ENCODE measurements at regions of chr10 and their contacts with region 1.

Region 1: GRCh38 chr10:22420787-22421517 is 75.7 kb downstream of the SPAG6 start:
- DNase-seq: no peak
- H3K4me3 ChIP-seq: no peak overlapping the region
- H3K27ac ChIP-seq: no peak overlapping the region
- H3K4me1 ChIP-seq: peaks cover 4% of the 10 kb centered on the region
- H3K27me3 ChIP-seq: no peaks in the 10 kb centered on the region
- CTCF ChIP-seq: peak; percentile 46

Region 2: DNA sequence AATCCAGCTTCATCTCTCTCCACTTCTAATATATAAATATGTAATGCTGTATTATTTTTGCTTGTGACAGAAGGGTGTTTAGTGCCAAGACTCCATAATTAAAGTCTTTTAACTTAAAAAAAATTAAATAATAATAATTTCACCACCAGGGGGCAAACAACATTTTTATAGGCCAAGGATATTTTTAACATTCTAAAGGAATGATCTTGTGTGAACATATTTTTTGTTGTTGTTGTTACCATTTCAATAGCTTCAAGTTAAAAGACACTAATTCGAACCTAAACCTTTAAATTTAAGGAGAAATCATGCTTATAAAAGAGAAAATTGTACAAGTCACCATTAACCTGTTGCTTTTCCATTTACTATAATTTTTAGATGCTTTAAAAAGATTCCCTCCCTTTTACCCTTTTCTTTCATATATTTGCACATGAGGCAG is 410.0 kb before region 1 on chr10:
- CTCF ChIA-PET with region 1: no interaction called
- POLR2A ChIA-PET with region 1: no interaction called
- intact Hi-C with region 1: loop called (anchors 5 kb)
- DNase-seq: no peak
- H3K4me3 ChIP-seq: no peak overlapping the region
- H3K27ac ChIP-seq: no peak overlapping the region
- H3K4me1 ChIP-seq: no peaks in the 10 kb centered on the region
- H3K27me3 ChIP-seq: no peaks in the 10 kb centered on the region
- CTCF ChIP-seq: peak; percentile 69